Activated naive CD8-positive, alpha-beta T cell treated with anti-CD3 and anti-CD28 coated beads, Interleukin-2, amount 10 ng/mL, durations not matched to agents 7 days and 5 days (primary cell): ENCODE measurements at regions of chr2 and their contacts with region 1.

Region 1: GRCh38 chr2:10129490-10129889 is 7.0 kb downstream of the RRM2 start:
- DNase-seq: no peak
- ATAC-seq: no peak
- H3K4me3 Mint-ChIP-seq: peak overlapping the region; percentile 93
- H3K27ac Mint-ChIP-seq: no peak overlapping the region
- H3K4me1 Mint-ChIP-seq: peaks cover 61% of the 10 kb centered on the region
- H3K27me3 Mint-ChIP-seq: no peaks in the 10 kb centered on the region

Region 2: GRCh38 chr2:10141736-10142642 is 12.5 kb after region 1 on chr2:
- POLR2A ChIA-PET with region 1: interaction called, 12 read pairs
- DNase-seq: peak; percentile 70
- ATAC-seq: peak; percentile 82
- H3K4me3 Mint-ChIP-seq: peak overlapping the region; percentile 72
- H3K27ac Mint-ChIP-seq: peak overlapping the region; percentile 89
- H3K4me1 Mint-ChIP-seq: peaks cover 30% of the 10 kb centered on the region
- H3K27me3 Mint-ChIP-seq: no peaks in the 10 kb centered on the region

Region 3: DNA sequence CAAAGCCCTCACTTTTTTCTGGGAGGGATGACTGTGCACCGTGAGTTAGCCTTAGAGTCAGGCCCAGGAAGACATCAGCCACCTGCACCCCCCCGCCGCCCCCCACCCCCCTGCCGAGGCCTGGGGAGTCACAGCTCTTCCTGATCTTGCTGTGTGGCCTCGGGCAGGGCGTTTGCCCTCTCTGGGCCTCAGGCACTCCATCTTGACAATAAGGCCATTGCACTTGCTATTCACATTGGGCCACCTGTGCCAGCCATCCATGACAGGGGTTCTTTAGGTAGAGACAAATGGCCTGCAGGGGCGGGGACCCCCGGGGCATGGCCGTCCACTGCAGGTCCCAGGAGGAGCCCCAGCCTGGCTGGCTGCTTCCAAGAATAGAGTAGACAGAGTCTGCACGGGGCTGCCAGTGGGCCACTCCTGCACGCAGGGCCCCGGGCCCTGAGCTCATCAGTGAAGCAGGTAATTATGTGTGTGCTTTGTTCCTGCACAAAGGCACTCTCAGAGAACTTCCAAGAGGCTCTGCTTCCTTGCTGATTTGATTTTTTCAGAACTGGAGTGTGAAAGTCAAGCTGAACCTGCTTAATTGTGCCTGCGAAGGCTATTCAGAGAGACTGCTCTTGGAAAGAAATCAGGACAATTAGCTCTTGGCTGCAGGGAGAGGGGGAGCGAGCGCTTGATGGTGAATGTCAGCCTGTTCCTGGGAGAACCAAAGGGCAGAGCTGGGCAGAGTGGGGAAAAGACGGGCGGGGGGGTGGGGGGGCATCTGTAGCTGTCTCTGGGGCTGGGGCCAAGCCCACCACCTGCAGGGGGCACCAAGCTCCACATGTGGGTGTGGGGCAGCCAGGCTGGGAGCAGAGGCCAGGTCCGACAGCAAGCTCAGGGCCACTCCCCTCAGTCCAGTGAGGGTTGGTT is 33.4 kb after region 1 on chr2:
- POLR2A ChIA-PET with region 1: no interaction called
- DNase-seq: peak; percentile 27
- ATAC-seq: no peak
- H3K4me3 Mint-ChIP-seq: no peak overlapping the region
- H3K27ac Mint-ChIP-seq: peak overlapping the region; percentile 19
- H3K4me1 Mint-ChIP-seq: peaks cover 15% of the 10 kb centered on the region
- H3K27me3 Mint-ChIP-seq: no peaks in the 10 kb centered on the region

Region 4: DNA sequence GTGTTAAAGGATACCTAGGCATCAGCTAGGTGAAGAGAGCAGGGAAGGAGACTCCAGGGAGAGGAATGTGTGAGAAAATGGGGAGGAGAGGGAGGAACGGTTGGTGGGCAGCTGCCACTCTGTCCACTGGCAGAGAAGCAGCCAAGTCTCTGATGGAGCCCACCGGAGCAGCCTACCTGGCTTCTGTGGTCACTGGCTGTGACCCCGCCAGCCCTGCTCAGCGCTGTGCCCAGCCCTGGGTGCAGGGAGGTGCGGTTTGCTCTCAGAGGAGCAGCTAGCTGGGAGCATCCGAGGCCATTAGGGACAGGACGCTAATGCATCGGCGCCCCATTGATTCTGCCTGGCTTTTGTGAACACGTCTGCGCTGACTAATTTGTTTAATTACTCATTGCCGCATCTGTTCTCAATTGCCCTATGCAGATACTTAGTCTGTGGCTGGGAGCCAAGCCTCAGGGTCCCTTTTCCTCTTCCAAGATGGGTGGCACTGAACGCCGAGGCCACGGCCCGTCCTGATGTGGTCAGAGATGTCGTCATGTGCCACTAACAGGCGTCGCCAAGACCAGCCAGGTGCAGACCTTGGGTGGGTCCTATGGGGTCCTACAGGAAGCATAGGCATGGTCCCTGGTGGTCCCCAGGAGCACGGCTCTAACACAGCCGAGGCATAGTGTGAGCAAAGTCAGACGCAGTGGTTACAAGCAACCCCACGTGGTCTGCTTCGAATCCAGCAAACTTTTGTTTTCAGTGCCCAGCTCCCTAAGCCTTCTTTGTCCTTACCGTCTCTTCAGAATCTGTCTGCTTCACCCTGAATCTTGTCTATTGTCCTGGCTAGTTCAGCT is 75.1 kb after region 1 on chr2:
- POLR2A ChIA-PET with region 1: no interaction called
- DNase-seq: no peak
- ATAC-seq: peak; percentile 11
- H3K4me3 Mint-ChIP-seq: no peak overlapping the region
- H3K27ac Mint-ChIP-seq: no peak overlapping the region
- H3K4me1 Mint-ChIP-seq: no peaks in the 10 kb centered on the region
- H3K27me3 Mint-ChIP-seq: no peaks in the 10 kb centered on the region